Testis (tissue), 5 donors: ENCODE measurements at regions of chr2 and their contacts with region 1.

Region 1: GRCh38 chr2:96951093-96951654 is 35.2 kb downstream of the FAM178B start:
- DNase-seq: peak; percentile 77
- H3K4me3 ChIP-seq: no peak overlapping the region
- H3K27ac ChIP-seq: peak overlapping the region in 1 of 2 donors; percentile 78
- H3K4me1 ChIP-seq: peaks cover 46% of the 10 kb centered on the region
- H3K27me3 ChIP-seq: no peaks in the 10 kb centered on the region
- CTCF ChIP-seq: peak; percentile 83 to 90 (median 84)
- POLR2A ChIP-seq: no peak

Region 2: DNA sequence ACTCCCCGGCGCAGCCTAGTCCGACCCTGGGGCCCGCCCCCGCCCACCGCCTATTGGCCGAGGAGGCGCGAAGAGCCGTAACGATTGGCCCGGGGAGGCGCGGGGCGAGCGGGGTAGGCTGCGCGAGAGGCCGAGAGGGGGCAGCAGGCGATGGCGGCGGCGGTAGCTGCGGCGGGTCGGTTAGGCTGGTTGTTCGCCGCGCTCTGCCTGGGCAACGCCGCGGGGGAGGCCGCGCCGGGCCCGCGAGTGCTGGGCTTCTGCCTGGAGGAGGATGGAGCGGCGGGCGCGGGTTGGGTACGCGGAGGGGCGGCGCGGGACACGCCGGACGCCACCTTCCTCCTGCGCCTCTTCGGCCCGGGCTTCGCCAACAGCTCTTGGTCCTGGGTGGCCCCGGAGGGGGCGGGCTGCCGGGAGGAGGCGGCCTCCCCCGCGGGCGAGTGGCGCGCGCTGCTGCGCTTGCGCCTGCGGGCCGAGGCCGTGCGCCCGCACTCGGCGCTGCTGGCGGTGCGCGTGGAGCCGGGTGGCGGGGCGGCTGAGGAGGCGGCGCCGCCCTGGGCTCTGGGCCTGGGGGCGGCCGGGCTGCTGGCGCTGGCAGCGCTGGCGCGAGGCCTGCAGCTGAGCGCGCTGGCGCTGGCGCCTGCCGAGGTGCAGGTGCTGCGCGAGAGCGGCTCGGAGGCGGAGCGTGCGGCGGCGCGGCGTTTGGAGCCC is 134.9 kb before region 1 on chr2 and contains the start of gene CNNM3:
- intact Hi-C with region 1: loop called (anchors 5 kb)
- DNase-seq: peak; percentile 97
- H3K4me3 ChIP-seq: peak within 1 kb of the TSS; percentile 80 to 86
- H3K27ac ChIP-seq: peak within 1 kb of the TSS; percentile 91 to 94
- H3K4me1 ChIP-seq: peaks cover 20% of the 10 kb centered on the region
- H3K27me3 ChIP-seq: no peaks in the 10 kb centered on the region
- CTCF ChIP-seq: peak; percentile 55 to 65 (median 56)
- POLR2A ChIP-seq: no peak
- total RNA-seq, gene CNNM3: 32.2 to 33.6 TPM

Region 3: DNA sequence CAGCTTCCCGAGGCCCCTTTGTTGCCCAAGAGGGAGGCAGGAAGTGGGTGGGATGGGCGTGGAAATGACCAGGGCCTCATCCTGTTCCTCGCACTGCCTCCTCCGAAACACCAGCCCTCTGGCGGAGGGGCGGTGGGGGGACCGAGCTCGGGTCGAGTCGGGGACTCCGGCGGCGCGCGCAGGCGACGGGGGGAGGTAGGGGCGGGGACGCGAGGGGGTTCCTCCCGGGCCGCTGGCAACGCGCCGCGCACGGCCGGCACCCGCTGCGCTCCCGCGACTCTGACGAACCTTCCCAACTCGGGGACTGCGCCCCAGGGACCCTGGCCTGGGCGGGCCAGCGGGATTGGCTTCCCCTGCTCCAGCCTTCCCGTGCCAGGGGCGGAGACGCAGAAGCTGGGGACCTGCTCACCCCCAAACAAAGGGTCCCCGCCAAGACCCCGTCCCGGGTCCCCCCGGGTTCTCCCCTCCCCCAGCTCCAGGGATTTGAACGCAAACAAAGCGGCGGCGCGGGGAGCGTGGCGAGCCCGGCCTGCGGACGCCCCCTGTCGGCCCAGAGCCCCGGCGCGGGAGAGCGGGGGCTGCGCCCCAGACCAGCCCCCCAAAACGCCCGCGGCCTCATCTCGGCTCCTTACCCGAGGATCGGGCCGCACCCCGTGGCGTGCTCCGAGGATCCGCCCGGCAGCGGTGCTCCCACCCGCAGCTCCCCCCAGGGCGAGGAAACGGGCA is 82.5 kb before region 1 on chr2:
- intact Hi-C with region 1: loop called (anchors 5 kb)
- DNase-seq: peak; percentile 85
- H3K4me3 ChIP-seq: peak overlapping the region; percentile 85 to 96
- H3K27ac ChIP-seq: peak overlapping the region; percentile 92 to 95
- H3K4me1 ChIP-seq: peaks cover 15% of the 10 kb centered on the region
- H3K27me3 ChIP-seq: no peaks in the 10 kb centered on the region
- CTCF ChIP-seq: peak; percentile 41 to 60 (median 48)
- POLR2A ChIP-seq: no peak

Region 4: GRCh38 chr2:96907115-96908041 is 43.8 kb before region 1 on chr2:
- intact Hi-C with region 1: loop called (anchors 5 kb)
- DNase-seq: peak; percentile 66
- H3K4me3 ChIP-seq: no peak overlapping the region
- H3K27ac ChIP-seq: peak overlapping the region; percentile 70 to 85
- H3K4me1 ChIP-seq: peaks cover 18% of the 10 kb centered on the region
- H3K27me3 ChIP-seq: no peaks in the 10 kb centered on the region
- CTCF ChIP-seq: no peak
- POLR2A ChIP-seq: no peak

Region 5: GRCh38 chr2:97663965-97664635 is 712.9 kb after region 1 on chr2 and contains the start of gene ACTR1B:
- intact Hi-C with region 1: no loop called
- DNase-seq: peak; percentile 99
- H3K4me3 ChIP-seq: peak within 1 kb of the TSS; percentile 66 to 89
- H3K27ac ChIP-seq: peak within 1 kb of the TSS; percentile 88 to 92
- H3K4me1 ChIP-seq: peaks cover 16% of the 10 kb centered on the region
- H3K27me3 ChIP-seq: no peaks in the 10 kb centered on the region
- CTCF ChIP-seq: peak; percentile 46 to 64 (median 60)
- POLR2A ChIP-seq: peak; percentile 88
- total RNA-seq, gene ACTR1B: 56.3 to 81.0 TPM